ENCODE measurements at regions of chrX and their contacts with region 1.

Region 1: GRCh38 chrX:107672955-107673378 is 44.7 kb downstream of the PRPS1 start:
- DNase-seq: peak; percentile 93
- H3K4me3 Mint-ChIP-seq: peak overlapping the region; percentile 65
- H3K27ac Mint-ChIP-seq: peak overlapping the region; percentile 94
- H3K4me1 Mint-ChIP-seq: peaks cover 39% of the 10 kb centered on the region
- H3K27me3 Mint-ChIP-seq: no peaks in the 10 kb centered on the region

Region 2: DNA sequence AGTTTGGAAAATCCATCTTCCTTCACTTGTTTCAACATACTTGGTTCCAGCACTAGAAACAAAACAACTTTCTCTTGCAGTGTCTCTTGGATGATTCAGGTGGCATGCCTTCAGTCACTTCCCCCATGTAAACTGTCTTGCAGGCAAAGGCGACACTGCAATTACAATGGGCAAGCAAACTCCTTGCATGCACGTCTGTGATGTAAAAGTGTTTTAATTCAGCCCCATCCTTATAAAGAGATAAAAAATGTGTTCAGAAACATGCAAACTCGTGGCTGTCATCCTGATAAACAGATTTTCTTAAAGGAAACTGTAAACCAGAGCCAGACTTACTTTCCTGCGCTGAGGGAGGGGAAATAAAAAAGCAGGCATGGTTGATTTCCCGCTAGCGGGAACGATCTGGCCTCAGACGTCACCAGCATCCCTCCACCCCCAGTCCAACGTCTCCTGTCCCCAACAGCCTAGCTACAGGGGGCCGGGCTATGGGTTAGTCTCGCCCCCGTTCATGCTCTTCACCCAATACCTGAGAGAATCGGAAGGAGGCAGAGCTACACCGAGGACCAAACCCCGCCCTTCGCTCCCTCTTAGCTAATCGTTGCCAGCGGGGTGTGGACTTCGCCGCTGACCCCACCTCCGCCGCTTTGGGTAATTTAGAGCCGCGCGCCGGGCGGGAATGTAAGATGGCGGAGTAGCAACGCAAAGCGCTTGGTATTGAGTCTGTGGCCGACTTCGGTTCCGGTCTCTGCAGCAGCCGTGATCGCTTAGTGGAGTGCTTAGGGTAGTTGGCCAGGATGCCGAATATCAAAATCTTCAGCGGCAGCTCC is 44.9 kb before region 1 on chrX and contains the start of gene PRPS1:
- intact Hi-C with region 1: loop called (anchors 1 kb)
- DNase-seq: peak; percentile 96
- H3K4me3 Mint-ChIP-seq: peak within 1 kb of the TSS; percentile 94
- H3K27ac Mint-ChIP-seq: peak within 1 kb of the TSS; percentile 95
- H3K4me1 Mint-ChIP-seq: peaks cover 22% of the 10 kb centered on the region
- H3K27me3 Mint-ChIP-seq: no peaks in the 10 kb centered on the region
- total RNA-seq, gene PRPS1: 112 and 115 TPM in 2 replicates

Region 3: DNA sequence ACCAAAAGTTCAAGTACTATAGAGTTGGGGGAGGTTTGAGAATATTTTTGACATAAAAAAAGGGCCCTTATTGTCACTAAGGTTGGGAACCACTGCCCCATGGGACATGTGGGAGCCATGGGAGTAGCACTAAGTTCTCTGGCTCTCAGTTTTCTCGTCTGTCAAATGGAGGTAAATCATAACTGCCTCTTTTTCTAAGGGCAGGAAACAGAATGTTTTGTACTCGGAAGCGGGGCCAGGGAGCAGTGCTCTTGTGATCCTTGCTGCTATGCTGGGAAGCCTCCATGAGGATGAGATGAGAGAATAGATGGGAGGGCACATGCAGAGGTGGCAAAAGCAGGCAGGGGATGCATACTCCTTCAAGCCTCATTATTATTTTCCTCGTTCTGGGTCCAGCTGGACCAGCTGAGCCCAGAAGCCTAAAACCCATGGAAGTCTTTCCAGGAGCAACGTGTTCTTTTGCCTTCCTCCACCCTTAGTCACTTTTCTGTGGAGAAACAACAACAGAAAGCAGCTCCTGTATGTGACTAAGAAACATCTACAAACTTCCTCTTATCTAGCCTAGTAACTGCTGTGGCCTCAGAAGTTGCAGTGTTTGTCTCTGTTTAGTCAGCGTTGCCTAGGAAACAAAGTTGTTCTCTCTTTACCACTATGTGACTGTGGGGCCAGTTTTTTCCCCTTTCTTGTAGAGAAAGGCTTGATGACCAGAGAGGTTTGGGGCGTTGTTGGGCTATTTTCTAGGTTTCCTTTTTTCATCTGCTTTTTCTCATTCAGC is 37.8 kb after region 1 on chrX:
- intact Hi-C with region 1: loop called (anchors 1 kb)
- DNase-seq: peak; percentile 91
- H3K4me3 Mint-ChIP-seq: peak overlapping the region; percentile 80
- H3K27ac Mint-ChIP-seq: peak overlapping the region; percentile 99
- H3K4me1 Mint-ChIP-seq: peaks cover 46% of the 10 kb centered on the region
- H3K27me3 Mint-ChIP-seq: no peaks in the 10 kb centered on the region

Region 4: GRCh38 chrX:107716816-107717700 is 44.1 kb after region 1 on chrX:
- intact Hi-C with region 1: loop called (anchors 1 kb)
- DNase-seq: peak; percentile 96
- H3K4me3 Mint-ChIP-seq: peak overlapping the region; percentile 95
- H3K27ac Mint-ChIP-seq: peak overlapping the region; percentile 91
- H3K4me1 Mint-ChIP-seq: peaks cover 36% of the 10 kb centered on the region
- H3K27me3 Mint-ChIP-seq: no peaks in the 10 kb centered on the region

Region 5: DNA sequence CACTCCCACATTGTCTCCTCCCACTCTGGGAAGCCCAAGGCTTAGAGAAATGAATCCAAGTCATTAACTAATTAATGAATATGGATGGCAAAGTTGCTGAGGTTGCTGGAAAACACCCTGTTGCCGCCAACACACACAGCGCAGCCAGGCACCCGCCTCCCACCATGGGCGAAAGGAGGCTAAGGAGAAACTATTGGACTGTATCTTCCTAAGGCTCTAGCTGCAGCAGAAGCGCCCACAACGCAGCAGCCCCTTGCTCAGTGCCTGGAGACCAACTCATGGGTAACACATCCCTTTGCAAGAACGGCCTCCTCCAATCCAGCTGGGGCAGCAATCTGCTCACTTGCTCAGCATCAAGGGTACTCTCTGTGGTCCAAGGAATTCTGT is 68.4 kb after region 1 on chrX:
- intact Hi-C with region 1: loop called (anchors 2 kb)
- DNase-seq: no peak
- H3K4me3 Mint-ChIP-seq: peak overlapping the region; percentile 89
- H3K27ac Mint-ChIP-seq: peak overlapping the region; percentile 99
- H3K4me1 Mint-ChIP-seq: peaks cover 15% of the 10 kb centered on the region
- H3K27me3 Mint-ChIP-seq: peaks cover 2% of the 10 kb centered on the region

Region 6: GRCh38 chrX:107826238-107827029 is 153.5 kb after region 1 on chrX:
- intact Hi-C with region 1: loop called (anchors 5 kb)
- DNase-seq: peak; percentile 69
- H3K4me3 Mint-ChIP-seq: peak overlapping the region; percentile 83
- H3K27ac Mint-ChIP-seq: peak overlapping the region; percentile 81
- H3K4me1 Mint-ChIP-seq: peaks cover 18% of the 10 kb centered on the region
- H3K27me3 Mint-ChIP-seq: peaks cover 10% of the 10 kb centered on the region

Region 7: GRCh38 chrX:107894038-107894437 is 221.1 kb after region 1 on chrX:
- intact Hi-C with region 1: loop called (anchors 5 kb)
- DNase-seq: peak; percentile 80
- H3K4me3 Mint-ChIP-seq: no peak overlapping the region
- H3K27ac Mint-ChIP-seq: no peak overlapping the region
- H3K4me1 Mint-ChIP-seq: no peaks in the 10 kb centered on the region
- H3K27me3 Mint-ChIP-seq: peaks cover 2% of the 10 kb centered on the region